ENCODE measurements at regions of chr12 and their contacts with region 1.

Region 1: GRCh38 chr12:34233618-34234017 is 211.3 kb downstream of the ALG10 start:
- DNase-seq: no peak
- ATAC-seq: no peak
- H3K4me3 Mint-ChIP-seq: no peak overlapping the region
- H3K27ac Mint-ChIP-seq: no peak overlapping the region
- H3K4me1 Mint-ChIP-seq: no peaks in the 10 kb centered on the region
- H3K27me3 Mint-ChIP-seq: peaks cover 6% of the 10 kb centered on the region

Region 2: DNA sequence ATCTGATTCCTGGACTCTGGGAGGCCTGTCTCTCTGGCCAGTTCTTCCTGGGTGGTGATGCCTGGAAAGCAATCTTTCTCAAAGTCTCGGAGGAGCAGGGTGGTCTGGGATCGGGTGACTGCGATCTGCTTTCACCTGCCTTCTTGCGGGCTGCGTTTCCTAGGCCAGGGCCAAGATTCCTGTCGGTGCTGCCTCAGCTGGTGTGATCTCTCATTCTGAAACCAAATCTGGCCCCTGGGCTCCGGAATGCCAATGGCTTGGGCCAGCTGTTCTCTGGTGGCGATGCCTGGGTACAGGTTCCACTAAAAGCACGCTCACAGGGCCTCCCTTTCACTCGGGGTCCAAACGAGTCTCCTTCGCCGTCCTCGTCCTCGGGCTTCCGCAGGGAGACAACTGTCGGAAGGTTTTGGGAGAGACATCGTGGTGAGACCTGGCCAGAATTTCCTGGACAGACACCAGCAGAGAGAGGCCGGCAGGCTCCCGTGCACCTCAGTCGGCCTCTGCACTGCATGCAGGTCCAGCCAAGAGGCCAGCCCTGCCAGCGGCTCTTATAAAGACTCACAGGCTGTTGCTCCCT is 24.3 kb before region 1 on chr12:
- CTCF ChIA-PET with region 1: no interaction called
- POLR2A ChIA-PET with region 1: no interaction called
- intact Hi-C with region 1: no loop called
- DNase-seq: no peak
- ATAC-seq: no peak
- H3K4me3 Mint-ChIP-seq: no peak overlapping the region
- H3K27ac Mint-ChIP-seq: no peak overlapping the region
- H3K4me1 Mint-ChIP-seq: no peaks in the 10 kb centered on the region
- H3K27me3 Mint-ChIP-seq: no peaks in the 10 kb centered on the region

Region 3: GRCh38 chr12:34253674-34254073 is 20.1 kb after region 1 on chr12:
- CTCF ChIA-PET with region 1: no interaction called
- POLR2A ChIA-PET with region 1: no interaction called
- intact Hi-C with region 1: loop called in 1 of 2 experiments (anchors 2 kb)
- DNase-seq: no peak
- ATAC-seq: no peak
- H3K4me3 Mint-ChIP-seq: no peak overlapping the region
- H3K27ac Mint-ChIP-seq: no peak overlapping the region
- H3K4me1 Mint-ChIP-seq: no peaks in the 10 kb centered on the region
- H3K27me3 Mint-ChIP-seq: no peaks in the 10 kb centered on the region

Measured in activated CD4-positive, alpha-beta T cell treated with anti-CD3 and anti-CD28 coated beads for 36 hours (primary cell).